Head of caudate nucleus (tissue), 42 donors: ENCODE measurements at regions of chr10 and their contacts with region 1.

Region 1: DNA sequence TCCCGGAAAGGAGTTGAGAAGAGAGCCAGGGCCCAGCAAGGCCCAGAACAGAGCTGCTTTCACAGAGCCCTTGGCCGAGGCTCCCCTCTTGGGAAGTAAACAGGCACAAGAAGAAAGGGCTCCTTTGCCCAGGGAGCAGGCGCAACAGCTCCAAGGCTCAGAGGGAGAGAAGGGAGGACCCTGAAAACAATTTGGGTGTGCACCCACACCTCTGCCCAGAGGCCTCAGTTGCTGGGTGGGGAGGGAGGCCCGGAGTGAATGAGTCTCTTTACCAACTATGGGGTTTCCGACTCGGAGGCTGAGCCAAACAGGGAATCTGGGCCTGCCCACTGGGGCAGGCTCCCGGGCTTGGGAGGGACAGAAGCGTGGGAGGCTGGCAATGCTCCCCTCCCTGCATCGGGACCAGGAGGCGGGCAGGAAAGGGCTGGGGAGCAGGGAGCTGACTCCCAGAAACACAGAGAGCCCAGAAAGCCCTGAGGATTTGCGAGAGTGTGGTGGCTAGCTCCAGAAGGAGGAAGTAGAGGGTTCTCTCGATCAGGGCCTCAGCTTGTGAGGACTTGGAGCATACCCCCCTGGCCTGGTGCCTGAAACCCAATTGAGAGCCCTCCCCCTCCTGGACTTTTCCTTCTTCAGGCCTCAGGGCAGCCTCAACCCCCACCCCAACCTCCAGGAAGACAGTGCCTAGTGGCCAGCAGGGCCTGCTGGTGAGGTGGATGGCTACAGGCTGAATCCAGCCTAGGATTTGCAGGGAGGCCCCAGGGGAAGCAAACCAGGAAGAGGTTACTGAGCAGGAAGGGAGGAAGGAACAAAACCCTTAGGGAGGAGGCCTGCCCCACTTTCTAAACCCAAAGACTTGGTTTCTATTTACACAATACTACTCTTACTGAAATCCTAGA is 6.2 kb downstream of the C10orf105 start:
- DNase-seq: peak; percentile 61 to 96 (median 86)

Region 2: GRCh38 chr10:71378336-71379117 is 334.9 kb before region 1 on chr10:
- intact Hi-C with region 1: loop called (anchors 5 kb)
- DNase-seq: no peak

Region 3: GRCh38 chr10:71390461-71390835 is 322.9 kb before region 1 on chr10:
- intact Hi-C with region 1: loop called (anchors 5 kb)
- DNase-seq: peak; percentile 43 to 87 (median 71)

Region 4: DNA sequence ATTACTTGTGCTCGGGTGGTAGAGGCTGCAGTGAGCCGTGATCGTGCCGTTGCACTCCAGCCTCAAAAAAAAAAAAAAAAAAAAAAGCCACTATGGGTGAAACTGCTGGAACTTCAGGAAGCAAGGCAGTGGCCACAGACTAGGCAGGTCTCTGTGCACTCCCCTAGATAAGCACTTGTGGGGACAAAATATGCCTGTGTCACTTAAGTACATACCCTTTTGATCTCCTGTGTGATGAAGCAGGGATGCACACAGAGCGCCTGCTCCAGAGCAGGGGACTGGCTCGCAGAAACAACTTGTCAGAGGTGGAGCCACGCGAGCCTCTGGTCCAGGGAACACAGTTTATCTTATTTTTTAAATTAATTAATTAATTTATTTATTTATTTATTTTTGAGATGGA is 180.5 kb after region 1 on chr10:
- intact Hi-C with region 1: loop called (anchors 10 kb)
- DNase-seq: no peak